Activated CD4-positive, alpha-beta T cell treated with anti-CD3 and anti-CD28 coated beads, Interleukin-2, amount 10 ng/mL, durations not matched to agents 24 days and 14 days (primary cell): ENCODE measurements at regions of chr4 and their contacts with region 1.

Region 1: DNA sequence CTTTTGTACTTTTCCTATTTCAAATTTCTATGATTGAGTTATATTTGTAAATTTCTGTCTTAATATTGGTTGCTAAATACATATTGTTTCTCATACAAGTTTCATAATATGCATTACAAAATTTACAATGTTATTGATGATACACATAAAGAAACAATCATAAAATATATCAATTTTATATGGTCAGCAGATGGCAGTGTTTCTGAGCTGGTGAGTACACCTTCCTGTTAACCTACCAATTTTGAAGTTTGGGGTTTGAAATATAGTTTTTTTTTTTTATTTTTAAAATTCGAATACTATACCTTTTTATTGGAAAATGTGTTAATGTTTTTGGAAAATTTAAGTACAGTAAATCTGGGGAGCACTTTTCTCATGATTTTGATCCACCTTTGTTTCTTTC is 1953.1 kb upstream of the ADGRL3 start:
- DNase-seq: no peak
- H3K4me3 Mint-ChIP-seq: no peak overlapping the region
- H3K27ac Mint-ChIP-seq: no peak overlapping the region
- H3K4me1 Mint-ChIP-seq: no peaks in the 10 kb centered on the region
- H3K27me3 Mint-ChIP-seq: no peaks in the 10 kb centered on the region

Region 2: DNA sequence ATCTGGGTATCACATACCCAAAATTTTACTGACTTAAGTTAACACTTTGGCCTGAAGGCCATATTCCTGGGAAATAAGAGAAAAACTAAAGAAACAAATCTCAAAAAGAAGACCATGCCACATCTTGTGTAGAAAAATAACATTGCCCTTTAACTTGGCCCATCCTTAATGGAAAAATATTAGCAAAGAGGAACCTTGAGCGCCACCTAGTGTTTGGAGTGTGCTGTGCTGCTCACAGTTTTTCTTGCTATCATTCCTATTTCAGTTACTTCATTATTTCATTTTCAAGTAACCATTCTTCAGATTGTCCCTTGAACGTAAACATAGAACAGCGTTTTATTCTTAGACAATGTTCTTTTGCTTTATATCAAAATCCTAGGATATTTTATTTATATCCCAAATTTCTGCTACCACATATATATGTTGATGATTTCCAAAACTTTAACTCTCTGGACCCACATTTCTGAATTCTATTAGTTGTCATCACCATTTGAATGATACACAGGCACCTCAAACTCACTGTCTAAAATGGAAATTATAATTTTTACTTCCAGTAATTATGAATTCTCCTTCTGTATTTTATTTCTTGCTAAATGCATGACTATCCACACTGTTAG is 954.1 kb after region 1 on chr4:
- intact Hi-C with region 1: loop called (anchors 5 kb)
- DNase-seq: peak; percentile 75
- H3K4me3 Mint-ChIP-seq: no peak overlapping the region
- H3K27ac Mint-ChIP-seq: no peak overlapping the region
- H3K4me1 Mint-ChIP-seq: no peaks in the 10 kb centered on the region
- H3K27me3 Mint-ChIP-seq: no peaks in the 10 kb centered on the region